ENCODE measurements at regions of chr5 and their contacts with region 1.

Region 1: DNA sequence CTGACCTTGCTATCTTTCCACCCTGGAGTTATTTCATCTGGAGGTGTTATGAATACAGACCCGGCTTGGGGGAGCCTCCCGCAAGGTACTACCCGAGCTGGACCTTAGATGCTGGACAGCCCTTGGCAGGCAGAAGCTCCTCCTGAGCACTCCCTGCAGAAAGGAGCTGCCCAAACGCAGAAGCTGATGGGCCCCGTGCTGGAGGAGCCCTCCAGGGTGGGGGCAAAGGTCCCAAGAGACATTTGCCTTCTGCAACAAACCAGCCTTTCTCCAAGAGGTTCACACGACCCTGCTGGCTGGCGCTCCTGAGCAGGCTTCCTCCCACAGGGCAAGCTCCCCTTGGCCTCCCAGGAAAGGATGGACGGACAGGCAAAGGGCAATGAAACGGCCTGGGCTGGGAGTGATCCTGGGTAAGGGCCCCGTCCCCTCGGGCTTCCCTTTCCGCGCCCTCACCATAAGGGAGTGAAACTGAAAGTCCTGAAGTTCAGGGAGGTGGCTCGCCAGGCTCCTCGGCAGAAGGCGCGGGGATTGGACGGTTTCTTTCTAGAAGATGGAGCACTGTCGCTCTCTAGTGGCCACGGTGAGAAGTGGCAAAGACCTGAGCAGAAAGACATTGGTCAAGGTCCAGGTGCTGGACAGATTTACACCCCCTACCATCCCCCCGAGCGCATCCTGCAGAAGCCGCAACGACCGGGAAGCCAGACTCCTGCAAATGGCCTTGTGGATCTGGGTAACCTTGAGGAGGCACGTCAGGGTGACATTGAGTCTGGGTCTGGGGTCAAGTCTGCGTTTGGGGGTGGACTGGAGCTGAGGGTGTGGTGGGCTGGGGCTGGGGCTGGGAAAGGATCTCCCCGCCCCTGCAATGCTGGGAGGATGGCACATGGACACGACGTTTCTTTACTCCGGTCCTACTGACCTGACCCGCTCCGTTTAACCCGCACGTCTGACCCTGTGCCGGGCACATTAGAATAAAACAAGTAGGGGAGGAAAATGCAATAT is 56.4 kb downstream of the NEURL1B start:
- DNase-seq: peak; percentile 77 to 83
- ATAC-seq: peak; percentile 72 to 88
- H3K4me3 ChIP-seq: peak overlapping the region; percentile 68 to 88 (median 71)
- H3K27ac ChIP-seq: peak overlapping the region; percentile 71 to 77 (median 76)
- H3K4me1 ChIP-seq: peaks cover 8 to 25% of the 10 kb centered on the region in 2 donors
- H3K27me3 ChIP-seq: no peaks in the 10 kb centered on the region
- CTCF ChIP-seq: peak; percentile 66 to 92 (median 90)
- POLR2A ChIP-seq: peak in 1 of 2 donors; percentile 31

Region 2: GRCh38 chr5:172223901-172224873 is 473.2 kb before region 1 on chr5:
- in situ Hi-C with region 1: no loop called
- intact Hi-C with region 1: no loop called
- DNase-seq: no peak
- ATAC-seq: no peak
- H3K4me3 ChIP-seq: no peak overlapping the region
- H3K27ac ChIP-seq: no peak overlapping the region
- H3K4me1 ChIP-seq: no peaks in the 10 kb centered on the region
- H3K27me3 ChIP-seq: no peaks in the 10 kb centered on the region
- CTCF ChIP-seq: no peak
- POLR2A ChIP-seq: no peak

Region 3: GRCh38 chr5:172640822-172641358 is 56.5 kb before region 1 on chr5 and contains the start of gene NEURL1B:
- in situ Hi-C with region 1: loop called in 1 of 4 experiments (anchors 5 kb)
- intact Hi-C with region 1: loop called (anchors 1 kb)
- DNase-seq: peak; percentile 30 to 52
- ATAC-seq: peak; percentile 68 to 70
- H3K4me3 ChIP-seq: peak within 1 kb of the TSS; percentile 64 to 74 (median 72)
- H3K27ac ChIP-seq: peak within 1 kb of the TSS; percentile 80 to 87 (median 84)
- H3K4me1 ChIP-seq: peaks cover 6 to 11% of the 10 kb centered on the region in 2 donors
- H3K27me3 ChIP-seq: peaks cover 0 to 6% (median 4%) of the 10 kb centered on the region in 3 donors
- CTCF ChIP-seq: peak in 2 of 5 experiments; percentile 19 to 22
- POLR2A ChIP-seq: peak; percentile 24 to 63
- total RNA-seq, gene NEURL1B: 8.7 to 18.8 (median 15.1) TPM

Region 4: DNA sequence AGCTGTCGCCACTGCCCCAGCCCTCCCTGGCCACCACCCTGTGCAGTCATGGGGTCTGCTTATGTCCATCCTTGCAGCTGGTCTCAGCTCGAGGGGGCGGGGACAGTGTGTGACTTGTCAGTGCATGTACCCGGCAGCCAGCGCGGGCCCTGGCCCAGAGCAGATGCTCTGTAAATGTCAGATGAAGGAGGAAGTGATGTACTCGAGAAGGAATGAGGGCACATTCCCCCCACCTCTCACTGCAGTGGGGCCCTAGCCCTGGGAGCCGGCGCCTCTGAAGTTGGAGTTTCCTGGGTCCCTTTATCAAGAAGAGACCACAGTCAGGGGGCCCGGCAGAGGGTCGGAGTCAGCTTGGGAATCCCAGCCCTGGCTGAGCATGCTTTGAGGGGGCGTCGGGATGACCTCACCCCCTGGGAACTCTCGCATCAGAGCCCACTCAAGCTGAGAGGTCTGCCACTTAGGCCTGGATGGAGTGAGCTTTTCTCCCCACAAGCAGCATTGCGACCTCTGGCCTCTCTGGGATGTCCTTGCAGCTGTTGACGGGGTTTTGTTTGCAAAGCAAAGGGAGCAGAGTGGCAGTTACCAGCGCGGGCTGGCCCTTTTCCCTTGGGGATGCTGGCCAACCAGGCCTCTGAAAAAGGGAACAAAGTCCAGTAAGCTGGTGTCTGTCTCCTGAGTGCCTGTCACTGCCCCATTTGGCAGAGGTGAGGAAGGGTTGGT is 37.4 kb before region 1 on chr5:
- in situ Hi-C with region 1: no loop called
- intact Hi-C with region 1: loop called (anchors 5 kb)
- DNase-seq: peak; percentile 47 to 76
- ATAC-seq: peak; percentile 57 to 63
- H3K4me3 ChIP-seq: no peak overlapping the region
- H3K27ac ChIP-seq: peak overlapping the region; percentile 76 to 84 (median 78)
- H3K4me1 ChIP-seq: peaks cover 15 to 44% of the 10 kb centered on the region in 2 donors
- H3K27me3 ChIP-seq: no peaks in the 10 kb centered on the region
- CTCF ChIP-seq: no peak
- POLR2A ChIP-seq: peak in 1 of 2 donors; percentile 31